Calu3 (cell line): ENCODE measurements at regions of chrX and their contacts with region 1.

Region 1: GRCh38 chrX:50812995-50813826 is 783 bp downstream of the SHROOM4 start:
- DNase-seq: peak; percentile 38
- H3K4me3 Mint-ChIP-seq: peak overlapping the region; percentile 76
- H3K27ac Mint-ChIP-seq: no peak overlapping the region
- H3K4me1 Mint-ChIP-seq: peaks cover 25% of the 10 kb centered on the region
- H3K27me3 Mint-ChIP-seq: no peaks in the 10 kb centered on the region
- CTCF ChIP-seq: no peak

Region 2: GRCh38 chrX:50905334-50905733 is 92.1 kb after region 1 on chrX:
- CTCF ChIA-PET with region 1: no interaction called
- intact Hi-C with region 1: loop called (anchors 2 kb)
- DNase-seq: peak; percentile 46
- H3K4me3 Mint-ChIP-seq: no peak overlapping the region
- H3K27ac Mint-ChIP-seq: no peak overlapping the region
- H3K4me1 Mint-ChIP-seq: no peaks in the 10 kb centered on the region
- H3K27me3 Mint-ChIP-seq: no peaks in the 10 kb centered on the region
- CTCF ChIP-seq: peak; percentile 77